Activated CD4-positive, alpha-beta T cell treated with anti-CD3 and anti-CD28 coated beads, Interleukin-2, amount 10 ng/mL, durations not matched to agents 7 days and 5 days (primary cell): ENCODE measurements at regions of chr2 and their contacts with region 1.

Region 1: DNA sequence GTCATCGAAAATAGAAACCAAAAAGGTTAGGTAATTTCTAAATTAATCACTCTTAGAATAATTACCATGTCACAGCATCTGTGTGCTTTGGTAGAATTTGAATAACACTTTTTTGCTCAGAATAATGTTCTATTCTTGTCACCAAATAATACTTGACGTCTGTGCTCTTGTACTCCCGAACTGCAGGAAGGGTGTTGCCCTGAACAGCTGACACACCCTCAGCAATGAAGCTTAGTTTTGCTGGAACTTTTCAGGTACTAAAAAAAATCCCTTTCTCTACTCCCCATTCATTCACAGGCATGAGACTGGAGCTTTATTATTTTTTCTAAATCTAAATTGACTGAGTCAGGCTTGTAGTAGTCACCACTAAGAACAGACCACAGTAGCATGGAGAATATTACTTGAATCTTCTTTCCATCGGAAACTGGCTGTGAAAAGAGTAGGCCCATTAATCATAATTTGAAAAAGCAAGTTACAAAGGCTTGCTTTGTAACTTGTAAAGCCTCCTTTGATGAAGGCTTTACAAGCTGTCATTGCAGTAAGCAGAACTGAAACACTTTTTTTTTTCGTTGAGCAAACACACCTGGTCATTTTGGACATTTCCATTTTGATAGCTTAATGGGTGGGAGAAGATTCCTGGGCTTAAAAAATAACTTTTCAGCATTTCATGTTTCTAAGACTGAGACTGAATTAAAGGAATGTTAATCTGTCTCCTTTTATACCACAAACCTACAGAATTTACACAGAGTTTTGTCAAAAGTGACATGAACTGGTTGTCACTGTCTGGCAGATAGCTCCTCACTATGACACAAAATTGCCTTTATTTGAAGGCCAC is 70.3 kb upstream of the PELI1 start:
- DNase-seq: peak; percentile 45
- H3K4me3 Mint-ChIP-seq: peak overlapping the region; percentile 52
- H3K27ac Mint-ChIP-seq: peak overlapping the region; percentile 93
- H3K4me1 Mint-ChIP-seq: peaks cover 52% of the 10 kb centered on the region
- H3K27me3 Mint-ChIP-seq: no peaks in the 10 kb centered on the region

Region 2: GRCh38 chr2:64196963-64197362 is 17.5 kb before region 1 on chr2:
- CTCF ChIA-PET with region 1: no interaction called
- POLR2A ChIA-PET with region 1: no interaction called
- DNase-seq: no peak
- H3K4me3 Mint-ChIP-seq: no peak overlapping the region
- H3K27ac Mint-ChIP-seq: no peak overlapping the region
- H3K4me1 Mint-ChIP-seq: peaks cover 29% of the 10 kb centered on the region
- H3K27me3 Mint-ChIP-seq: peaks cover 2% of the 10 kb centered on the region

Region 3: DNA sequence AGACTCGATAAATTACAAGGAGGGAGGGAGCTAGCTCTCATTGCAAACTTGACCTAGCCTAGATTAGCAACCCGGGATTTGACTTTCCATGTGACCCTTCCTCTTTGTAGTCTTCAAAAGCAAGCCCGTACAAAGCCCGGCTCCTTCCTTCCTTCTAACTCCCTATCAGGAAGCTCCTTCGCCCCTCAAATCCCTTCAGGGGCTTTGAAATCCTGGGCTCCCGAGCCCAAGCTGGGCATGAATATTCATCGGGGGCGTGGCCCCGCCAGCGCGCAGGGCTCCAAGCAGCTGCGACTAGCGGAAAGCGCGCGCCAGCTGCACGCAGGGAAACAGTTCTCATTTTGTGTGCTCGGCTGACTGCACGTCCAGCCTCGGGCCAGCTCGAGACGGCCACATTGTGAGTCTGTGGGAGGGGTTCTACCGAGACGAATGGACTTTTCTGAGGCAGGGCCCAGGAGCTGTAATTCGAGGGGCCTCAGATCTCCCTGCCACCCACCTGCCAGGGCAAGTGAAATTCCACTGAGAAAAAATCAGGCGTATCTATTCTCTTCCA is 13.7 kb after region 1 on chr2:
- CTCF ChIA-PET with region 1: interaction called, 20 read pairs
- POLR2A ChIA-PET with region 1: interaction called, 6 read pairs
- DNase-seq: peak; percentile 58
- H3K4me3 Mint-ChIP-seq: peak overlapping the region; percentile 78
- H3K27ac Mint-ChIP-seq: peak overlapping the region; percentile 91
- H3K4me1 Mint-ChIP-seq: peaks cover 25% of the 10 kb centered on the region
- H3K27me3 Mint-ChIP-seq: peaks cover 15% of the 10 kb centered on the region

Region 4: DNA sequence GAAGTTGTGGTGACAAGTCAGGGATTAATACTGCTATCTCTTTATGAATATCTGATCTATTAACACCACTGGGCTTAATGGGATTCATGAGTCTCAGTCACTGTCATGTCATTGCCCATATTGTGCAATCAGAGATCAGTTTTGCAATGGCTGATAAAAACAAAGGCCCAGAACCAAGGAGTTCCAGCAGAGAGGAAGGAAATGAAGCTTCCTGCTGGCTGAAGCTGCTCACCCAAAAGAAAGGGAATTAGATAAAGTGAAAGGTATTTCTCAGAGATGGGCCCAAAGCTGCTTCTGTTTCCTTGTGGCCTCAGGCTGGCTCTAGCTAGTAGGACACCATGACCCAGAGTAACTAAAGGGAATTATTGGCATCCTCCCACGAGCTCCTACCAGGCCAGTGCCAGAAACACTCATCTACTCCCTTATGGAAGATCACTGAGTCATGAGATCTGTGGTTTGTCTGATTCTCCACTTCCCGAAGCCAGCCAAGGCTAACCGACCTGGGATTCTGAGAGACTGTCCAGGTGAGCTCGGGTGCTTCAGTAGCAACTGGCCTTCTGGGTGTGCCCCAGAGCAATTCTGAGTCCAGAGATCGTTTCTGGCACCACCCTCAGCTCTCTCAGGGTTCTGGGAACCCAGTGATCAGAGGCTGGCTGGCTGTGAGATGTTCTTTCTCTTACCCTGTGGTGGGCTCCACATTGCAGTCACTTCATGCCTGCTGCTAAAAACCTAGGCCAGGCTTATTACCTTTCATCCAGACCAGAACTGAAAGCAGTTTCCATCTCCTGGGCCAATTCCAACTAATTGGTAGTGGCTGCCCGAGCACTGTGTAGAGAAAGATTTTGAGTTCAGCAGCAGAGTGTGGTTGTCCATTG is 59.3 kb after region 1 on chr2:
- CTCF ChIA-PET with region 1: no interaction called
- POLR2A ChIA-PET with region 1: no interaction called
- DNase-seq: no peak
- H3K4me3 Mint-ChIP-seq: no peak overlapping the region
- H3K27ac Mint-ChIP-seq: no peak overlapping the region
- H3K4me1 Mint-ChIP-seq: peaks cover 21% of the 10 kb centered on the region
- H3K27me3 Mint-ChIP-seq: peaks cover 2% of the 10 kb centered on the region